A549 (cell line): ENCODE measurements at regions of chr6 and their contacts with region 1.

Region 1: DNA sequence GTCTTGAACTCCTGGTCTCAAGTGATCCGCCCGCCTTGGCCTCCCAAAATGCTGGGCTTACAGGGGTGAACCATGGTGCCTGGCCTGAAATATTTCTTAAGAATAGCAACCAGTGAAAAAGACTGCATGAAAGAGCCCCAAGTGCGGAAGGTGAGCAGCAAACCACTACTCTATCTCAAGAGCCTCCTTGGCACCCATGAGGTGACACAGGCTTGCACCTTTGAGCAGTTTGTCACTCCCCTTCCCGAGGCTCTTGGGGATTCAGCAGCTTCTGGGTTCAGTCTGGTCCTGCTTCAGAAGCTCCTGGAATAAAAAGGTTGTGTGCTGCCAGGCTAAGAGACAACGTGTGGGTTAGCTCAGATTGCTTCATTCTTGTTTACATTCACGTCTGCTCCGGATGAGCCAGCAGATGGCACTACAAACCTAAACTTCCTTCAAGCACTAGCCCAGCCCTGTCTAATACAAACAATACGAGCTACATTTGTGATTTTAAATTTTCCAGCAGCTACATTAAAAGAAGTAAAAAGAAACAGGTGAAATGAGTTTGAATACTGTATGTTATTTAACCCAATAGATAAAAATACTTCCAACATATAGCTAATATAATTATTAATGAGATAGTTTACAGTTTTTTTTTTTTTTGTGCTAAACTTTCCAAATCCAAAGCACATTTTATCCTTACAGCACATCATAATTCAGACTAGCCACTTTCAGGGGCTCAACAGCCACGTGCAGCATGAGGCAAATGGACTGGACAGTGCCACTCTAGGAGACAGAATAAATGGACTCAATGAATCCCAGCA is 46.2 kb downstream of the GJA10 start:
- DNase-seq: peak; percentile 70 to 75
- ATAC-seq: peak; percentile 98 to 99
- H3K4me3 ChIP-seq: no peak overlapping the region
- H3K27ac ChIP-seq: peak overlapping the region in 1 of 2 experiments; percentile 27; a peak in 1 of 6 replicates
- H3K4me1 ChIP-seq: no peaks in the 10 kb centered on the region; the same call in 2 of the 3 replicates
- CTCF ChIP-seq: peak; percentile 75
- EP300 ChIP-seq: no peak
- POLR2A ChIP-seq: no peak
- RAD21 ChIP-seq: peak; percentile 87

Region 2: GRCh38 chr6:89895276-89895874 is 45.1 kb before region 1 on chr6:
- CTCF ChIA-PET with region 1: no interaction called
- POLR2A ChIA-PET with region 1: no interaction called
- DNase-seq: peak in 1 of 2 experiments; percentile 11
- ATAC-seq: peak; percentile 77 to 90
- H3K4me3 ChIP-seq: no peak overlapping the region
- H3K27ac ChIP-seq: no peak overlapping the region
- H3K4me1 ChIP-seq: no peaks in the 10 kb centered on the region
- CTCF ChIP-seq: no peak
- EP300 ChIP-seq: no peak
- POLR2A ChIP-seq: no peak
- RAD21 ChIP-seq: no peak

Region 3: GRCh38 chr6:89951574-89952104 is 11.2 kb after region 1 on chr6:
- CTCF ChIA-PET with region 1: interaction called, 16 read pairs
- POLR2A ChIA-PET with region 1: no interaction called
- DNase-seq: no peak
- ATAC-seq: no peak
- H3K4me3 ChIP-seq: no peak overlapping the region
- H3K27ac ChIP-seq: no peak overlapping the region
- H3K4me1 ChIP-seq: no peaks in the 10 kb centered on the region
- CTCF ChIP-seq: no peak
- EP300 ChIP-seq: no peak
- POLR2A ChIP-seq: no peak
- RAD21 ChIP-seq: no peak

Region 4: GRCh38 chr6:90383196-90383822 is 442.9 kb after region 1 on chr6:
- CTCF ChIA-PET with region 1: interaction called, 12 read pairs
- POLR2A ChIA-PET with region 1: no interaction called
- DNase-seq: no peak
- ATAC-seq: no peak
- H3K4me3 ChIP-seq: no peak overlapping the region
- H3K27ac ChIP-seq: no peak overlapping the region
- H3K4me1 ChIP-seq: no peaks in the 10 kb centered on the region
- CTCF ChIP-seq: no peak
- EP300 ChIP-seq: no peak
- POLR2A ChIP-seq: no peak
- RAD21 ChIP-seq: no peak

Region 5: DNA sequence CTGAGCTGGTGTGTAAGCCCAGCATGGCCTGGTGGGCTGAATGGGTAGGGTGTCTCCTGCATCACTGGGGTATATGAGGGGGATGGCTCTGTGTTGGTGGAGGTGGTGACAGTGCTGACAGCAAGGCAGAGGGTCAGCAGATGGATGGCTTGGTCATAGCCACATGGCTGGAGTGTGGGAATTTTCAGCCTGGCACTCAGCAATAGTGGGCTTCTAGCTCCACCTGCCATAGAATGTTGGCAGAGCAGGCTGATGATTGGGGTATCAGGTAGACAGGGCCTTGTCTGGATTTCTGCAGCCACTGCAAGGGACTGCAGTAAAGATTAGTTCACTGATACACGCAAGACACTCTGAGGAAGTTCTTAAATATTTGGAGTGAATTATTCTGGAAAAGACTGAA is 493.7 kb after region 1 on chr6:
- CTCF ChIA-PET with region 1: interaction called, 16 read pairs
- POLR2A ChIA-PET with region 1: no interaction called
- DNase-seq: peak in 1 of 2 experiments; percentile 3
- ATAC-seq: peak in 1 of 2 experiments; percentile 57; a peak in 4 of 6 replicates
- H3K4me3 ChIP-seq: no peak overlapping the region
- H3K27ac ChIP-seq: no peak overlapping the region
- H3K4me1 ChIP-seq: no peaks in the 10 kb centered on the region
- CTCF ChIP-seq: 0 out of 3 replicates have a peak, but pooled peaks have one; percentile 10
- EP300 ChIP-seq: no peak
- POLR2A ChIP-seq: no peak
- RAD21 ChIP-seq: peak; percentile 31 to 60; a peak in 3 of 5 replicates

Region 6: GRCh38 chr6:90468080-90468479 is 527.7 kb after region 1 on chr6:
- CTCF ChIA-PET with region 1: interaction called, 12 read pairs
- POLR2A ChIA-PET with region 1: no interaction called
- DNase-seq: no peak
- ATAC-seq: no peak
- H3K4me3 ChIP-seq: no peak overlapping the region
- H3K27ac ChIP-seq: no peak overlapping the region
- H3K4me1 ChIP-seq: no peaks in the 10 kb centered on the region
- CTCF ChIP-seq: no peak
- EP300 ChIP-seq: no peak
- POLR2A ChIP-seq: no peak
- RAD21 ChIP-seq: no peak